ENCODE measurements at regions of chr16 and their contacts with region 1.

Region 1: GRCh38 chr16:89842471-89843408 is 14.5 kb downstream of the SPIRE2 start:
- DNase-seq: peak; percentile 53
- H3K4me3 ChIP-seq: no peak overlapping the region
- H3K27ac ChIP-seq: no peak overlapping the region
- H3K4me1 ChIP-seq: peaks cover 8% of the 10 kb centered on the region
- H3K27me3 ChIP-seq: no peaks in the 10 kb centered on the region
- CTCF ChIP-seq: no peak

Region 2: DNA sequence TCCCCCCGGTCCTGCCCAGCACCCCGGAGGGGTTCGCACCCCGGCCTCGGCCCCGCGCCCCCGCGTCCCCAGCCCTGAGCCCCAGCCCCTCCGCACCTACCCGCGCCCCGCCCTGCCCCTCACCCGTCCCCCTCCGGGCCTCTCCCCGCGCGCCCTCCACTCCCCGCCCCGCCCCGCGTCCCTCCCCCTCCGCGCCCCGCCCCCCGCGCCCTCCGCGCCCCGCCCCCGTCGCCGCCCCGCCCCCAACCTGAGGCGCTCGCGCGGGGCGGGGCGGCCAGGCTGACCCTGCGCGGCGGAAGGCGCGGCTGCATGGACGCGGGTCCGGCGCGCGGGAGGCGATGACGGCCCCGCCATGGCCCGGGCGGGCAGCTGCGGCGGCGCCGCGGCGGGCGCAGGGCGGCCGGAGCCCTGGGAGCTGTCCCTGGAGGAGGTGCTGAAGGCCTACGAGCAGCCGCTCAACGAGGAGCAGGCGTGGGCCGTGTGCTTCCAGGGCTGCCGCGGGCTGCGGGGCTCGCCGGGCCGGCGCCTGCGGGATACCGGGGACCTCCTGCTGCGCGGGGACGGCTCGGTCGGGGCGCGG is 14.5 kb before region 1 on chr16 and contains the start of gene SPIRE2:
- CTCF ChIA-PET with region 1: no interaction called
- dilution Hi-C with region 1: no loop called
- in situ Hi-C with region 1: no loop called
- intact Hi-C with region 1: loop called (anchors 2 kb)
- DNase-seq: peak; percentile 58
- H3K4me3 ChIP-seq: peak within 1 kb of the TSS; percentile 36 to 53 (median 52)
- H3K27ac ChIP-seq: no peak within 1 kb of the TSS
- H3K4me1 ChIP-seq: peaks cover 14% of the 10 kb centered on the region
- H3K27me3 ChIP-seq: no peaks in the 10 kb centered on the region
- CTCF ChIP-seq: no peak
- total RNA-seq, gene SPIRE2: 1.7 to 7.1 TPM

Region 3: DNA sequence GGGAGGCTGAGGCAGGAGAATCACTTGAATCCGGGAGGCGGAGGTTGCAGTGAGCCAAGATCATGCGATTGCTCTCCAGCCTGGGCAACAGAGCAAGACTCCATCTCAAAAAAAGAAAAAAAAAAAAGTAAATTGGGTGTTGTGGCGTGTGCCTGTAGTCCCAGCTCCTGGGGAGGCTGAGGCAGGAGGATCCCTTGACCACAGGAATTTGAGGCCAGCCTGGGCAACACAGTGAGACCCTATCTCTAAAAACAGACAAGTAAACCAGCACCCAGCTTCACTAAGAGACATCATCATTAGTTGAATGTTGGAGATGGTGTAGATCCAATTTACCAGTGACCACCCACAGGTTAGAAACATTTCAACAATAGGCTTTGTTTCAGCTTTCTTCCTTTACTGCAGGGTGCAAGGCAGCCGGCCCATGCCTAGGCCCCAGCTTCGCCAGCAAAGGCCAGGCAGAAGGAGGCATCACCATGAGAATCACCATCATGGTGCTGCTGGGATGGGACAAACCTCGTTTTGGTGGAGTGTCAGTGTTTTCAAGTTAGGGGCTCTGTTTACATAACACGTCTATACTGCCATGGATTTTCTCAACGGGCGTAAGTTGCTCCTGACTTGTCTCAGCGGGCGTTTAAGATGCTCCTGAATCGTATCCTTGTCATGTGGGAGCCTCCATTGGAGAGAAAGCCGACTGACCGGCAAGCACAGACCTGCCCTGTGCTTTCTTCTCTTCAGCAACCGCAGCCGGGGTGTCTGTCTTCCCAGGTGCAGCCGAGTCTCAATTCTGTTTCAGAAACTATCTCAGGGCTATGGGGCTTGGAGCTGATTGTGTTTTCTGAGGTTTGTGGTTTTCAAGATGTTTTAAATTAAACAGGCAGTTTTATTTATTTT is 38.0 kb after region 1 on chr16:
- CTCF ChIA-PET with region 1: no interaction called
- dilution Hi-C with region 1: no loop called
- in situ Hi-C with region 1: no loop called
- intact Hi-C with region 1: no loop called
- DNase-seq: peak; percentile 93
- H3K4me3 ChIP-seq: no peak overlapping the region
- H3K27ac ChIP-seq: peak overlapping the region; percentile 56
- H3K4me1 ChIP-seq: peaks cover 16% of the 10 kb centered on the region
- H3K27me3 ChIP-seq: no peaks in the 10 kb centered on the region
- CTCF ChIP-seq: no peak

Region 4: GRCh38 chr16:89958068-89958467 is 115.3 kb after region 1 on chr16:
- CTCF ChIA-PET with region 1: no interaction called
- dilution Hi-C with region 1: no loop called
- in situ Hi-C with region 1: no loop called
- intact Hi-C with region 1: no loop called
- DNase-seq: no peak
- H3K4me3 ChIP-seq: no peak overlapping the region
- H3K27ac ChIP-seq: no peak overlapping the region
- H3K4me1 ChIP-seq: no peaks in the 10 kb centered on the region
- H3K27me3 ChIP-seq: no peaks in the 10 kb centered on the region
- CTCF ChIP-seq: no peak